ENCODE measurements at regions of chr2 and their contacts with region 1.

Region 1: DNA sequence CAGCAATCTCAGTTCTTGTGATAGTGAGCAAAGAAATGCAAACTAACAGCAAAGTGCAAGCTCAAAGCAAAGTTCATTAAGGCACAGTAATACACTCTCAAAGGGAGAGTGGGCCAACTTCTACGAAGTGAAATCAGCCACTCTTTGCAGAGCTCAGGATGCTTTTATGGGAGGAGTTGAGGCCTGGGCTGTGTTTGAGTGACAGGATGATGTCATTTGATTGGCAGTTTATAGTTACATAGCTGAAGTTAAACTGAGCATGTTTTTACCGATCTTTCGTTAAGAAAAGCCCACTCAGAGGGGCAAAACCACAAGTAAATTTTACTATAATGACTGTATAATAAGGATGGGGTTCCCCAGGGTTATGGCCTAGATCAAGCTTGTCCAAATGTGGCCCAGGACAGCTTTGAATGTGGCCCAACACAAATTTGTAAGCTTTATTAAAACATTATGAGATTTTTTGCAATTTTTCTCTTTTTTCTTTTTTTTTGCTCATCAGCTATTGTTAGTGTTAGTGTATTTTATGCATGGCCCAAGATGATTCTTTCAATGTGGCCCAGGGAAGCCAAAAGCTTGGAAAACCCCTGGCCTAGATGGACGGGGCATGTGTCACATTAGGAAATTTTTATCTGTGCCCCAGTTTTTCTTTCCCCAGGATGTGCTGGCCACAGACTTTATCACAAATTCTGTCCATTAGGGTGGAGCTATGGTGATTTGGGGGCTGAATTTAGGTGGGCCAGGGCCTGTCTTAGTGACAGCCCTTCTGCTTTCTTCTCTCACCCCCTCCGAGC is 8.3 kb upstream of the DNAH7 start:
- DNase-seq: no peak
- H3K4me3 Mint-ChIP-seq: no peak overlapping the region
- H3K27ac Mint-ChIP-seq: no peak overlapping the region
- H3K4me1 Mint-ChIP-seq: peaks cover 12% of the 10 kb centered on the region
- H3K27me3 Mint-ChIP-seq: no peaks in the 10 kb centered on the region

Region 2: GRCh38 chr2:196046123-196046917 is 30.7 kb before region 1 on chr2:
- CTCF ChIA-PET with region 1: no interaction called
- POLR2A ChIA-PET with region 1: no interaction called
- intact Hi-C with region 1: no loop called
- DNase-seq: no peak
- H3K4me3 Mint-ChIP-seq: no peak overlapping the region
- H3K27ac Mint-ChIP-seq: no peak overlapping the region
- H3K4me1 Mint-ChIP-seq: no peaks in the 10 kb centered on the region
- H3K27me3 Mint-ChIP-seq: peaks cover 4% of the 10 kb centered on the region

Region 3: GRCh38 chr2:196096982-196097745 is 20.2 kb after region 1 on chr2:
- CTCF ChIA-PET with region 1: interaction called, 25 read pairs
- POLR2A ChIA-PET with region 1: no interaction called
- intact Hi-C with region 1: no loop called
- DNase-seq: no peak
- H3K4me3 Mint-ChIP-seq: no peak overlapping the region
- H3K27ac Mint-ChIP-seq: no peak overlapping the region
- H3K4me1 Mint-ChIP-seq: peaks cover 23% of the 10 kb centered on the region
- H3K27me3 Mint-ChIP-seq: no peaks in the 10 kb centered on the region

Region 4: DNA sequence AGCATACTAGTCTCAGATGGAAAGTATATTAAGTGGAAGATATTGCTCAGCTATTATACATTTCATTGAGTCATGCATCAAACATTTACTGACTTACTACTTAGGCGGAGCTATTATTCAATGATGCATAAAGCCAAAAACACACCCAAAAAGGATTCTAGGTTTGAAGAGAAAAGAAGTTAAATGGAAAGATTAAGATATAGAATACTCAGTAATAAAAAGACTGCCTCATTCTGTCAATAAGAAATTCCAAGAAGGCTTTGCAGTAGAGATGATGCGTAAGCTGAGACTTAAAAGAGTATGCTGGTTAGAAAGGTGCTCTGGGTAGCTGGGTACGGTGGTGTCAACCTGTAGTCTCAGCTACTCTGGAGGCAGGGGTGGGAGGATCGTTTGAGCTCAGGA is 66.8 kb after region 1 on chr2:
- CTCF ChIA-PET with region 1: interaction called, 14 read pairs
- POLR2A ChIA-PET with region 1: no interaction called
- intact Hi-C with region 1: no loop called
- DNase-seq: no peak
- H3K4me3 Mint-ChIP-seq: no peak overlapping the region
- H3K27ac Mint-ChIP-seq: peak overlapping the region; percentile 87
- H3K4me1 Mint-ChIP-seq: peaks cover 59% of the 10 kb centered on the region
- H3K27me3 Mint-ChIP-seq: no peaks in the 10 kb centered on the region

Region 5: GRCh38 chr2:196213252-196213980 is 136.4 kb after region 1 on chr2:
- CTCF ChIA-PET with region 1: interaction called, 5 read pairs
- POLR2A ChIA-PET with region 1: no interaction called
- intact Hi-C with region 1: loop called (anchors 5 kb)
- DNase-seq: no peak
- H3K4me3 Mint-ChIP-seq: no peak overlapping the region
- H3K27ac Mint-ChIP-seq: peak overlapping the region; percentile 39
- H3K4me1 Mint-ChIP-seq: peaks cover 65% of the 10 kb centered on the region
- H3K27me3 Mint-ChIP-seq: no peaks in the 10 kb centered on the region

Region 6: DNA sequence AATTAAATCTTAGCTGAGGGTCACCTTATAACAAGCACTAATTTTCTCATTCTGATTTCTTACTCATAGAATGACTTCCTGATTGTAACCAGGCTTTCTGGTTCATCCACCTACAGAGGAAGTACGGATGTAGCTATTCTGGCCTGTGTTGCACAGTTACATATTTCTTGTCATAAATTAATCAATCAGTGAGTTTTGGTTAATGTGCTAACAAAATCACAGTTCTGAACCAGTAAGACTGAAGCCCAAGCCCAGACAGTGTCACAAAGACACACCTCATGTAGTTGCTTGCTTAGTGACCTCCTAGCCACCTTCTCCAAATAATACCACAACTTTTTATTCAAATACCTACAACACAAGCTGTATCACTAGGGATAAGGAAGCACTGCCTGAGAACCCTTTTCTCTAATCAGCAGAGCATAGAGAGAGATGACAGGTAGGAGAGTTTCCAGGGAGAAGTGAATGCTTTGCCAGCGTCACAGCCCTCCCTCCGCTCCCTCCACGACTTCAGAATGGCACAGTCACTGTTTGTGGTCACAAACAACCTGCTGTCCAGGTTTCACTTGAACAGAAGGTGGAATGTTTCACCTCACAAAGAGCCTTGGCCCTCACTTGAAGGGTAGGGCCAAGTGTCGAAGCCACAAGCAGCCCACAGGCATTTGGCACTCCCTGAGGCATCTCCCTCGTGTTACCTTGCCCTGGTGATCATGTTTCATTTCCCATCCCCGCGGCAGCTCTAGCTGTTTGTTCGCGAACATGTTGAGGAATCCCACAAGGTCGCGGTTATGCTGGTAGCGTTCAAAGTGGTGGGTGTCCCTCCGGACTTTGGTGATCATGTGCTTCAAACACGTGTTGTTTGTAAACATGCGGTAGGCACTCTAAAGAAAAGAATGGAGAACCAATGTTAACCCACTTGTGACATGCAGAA is 215.2 kb after region 1 on chr2:
- CTCF ChIA-PET with region 1: interaction called, 20 read pairs
- POLR2A ChIA-PET with region 1: no interaction called
- intact Hi-C with region 1: loop called (anchors 5 kb)
- DNase-seq: no peak
- H3K4me3 Mint-ChIP-seq: peak overlapping the region; percentile 10
- H3K27ac Mint-ChIP-seq: no peak overlapping the region
- H3K4me1 Mint-ChIP-seq: peaks cover 49% of the 10 kb centered on the region
- H3K27me3 Mint-ChIP-seq: no peaks in the 10 kb centered on the region

Region 7: DNA sequence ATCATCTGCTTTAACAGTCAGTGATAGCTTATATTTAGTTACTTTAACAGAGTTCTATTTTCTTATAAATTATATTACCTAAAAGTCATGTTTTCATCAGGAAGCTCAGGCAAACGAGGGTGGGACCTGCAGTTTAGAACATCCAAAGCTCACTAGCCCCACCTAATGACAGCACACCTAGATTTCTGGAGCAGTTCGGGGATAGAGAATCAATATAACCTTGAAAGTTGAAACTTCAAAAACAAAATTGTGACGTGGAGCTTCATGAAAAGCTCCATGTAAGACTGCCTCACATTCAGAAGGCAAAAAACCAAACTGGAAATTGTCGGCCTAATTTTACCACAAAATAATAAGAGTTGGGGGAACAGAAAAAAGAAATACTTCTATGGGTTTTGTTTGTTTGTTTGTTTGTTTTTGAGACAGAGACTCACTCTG is 376.7 kb after region 1 on chr2:
- CTCF ChIA-PET with region 1: interaction called, 65 read pairs
- POLR2A ChIA-PET with region 1: no interaction called
- intact Hi-C with region 1: loop called (anchors 1 kb)
- DNase-seq: peak; percentile 45
- H3K4me3 Mint-ChIP-seq: no peak overlapping the region
- H3K27ac Mint-ChIP-seq: no peak overlapping the region
- H3K4me1 Mint-ChIP-seq: no peaks in the 10 kb centered on the region
- H3K27me3 Mint-ChIP-seq: peaks cover 12% of the 10 kb centered on the region

Region 8: DNA sequence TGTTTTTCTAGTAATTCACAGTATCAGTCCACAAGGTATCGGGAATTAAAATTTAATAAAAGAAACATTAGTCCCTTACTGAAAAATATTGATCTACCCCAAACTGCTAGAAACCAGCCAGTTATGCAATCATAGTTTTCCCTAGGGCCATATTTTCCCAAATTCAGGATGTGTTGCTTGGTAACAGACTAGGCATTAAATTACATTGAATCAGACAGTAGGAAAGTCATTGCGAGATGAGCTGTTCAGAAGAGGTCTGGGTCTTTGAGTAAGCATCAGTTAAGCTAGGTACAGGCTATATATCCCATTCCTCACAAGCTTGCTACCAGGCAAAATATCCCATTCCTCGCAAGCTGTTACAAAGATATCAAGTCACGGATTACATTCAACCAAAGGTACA is 439.6 kb after region 1 on chr2:
- CTCF ChIA-PET with region 1: no interaction called
- POLR2A ChIA-PET with region 1: no interaction called
- intact Hi-C with region 1: no loop called
- DNase-seq: no peak
- H3K4me3 Mint-ChIP-seq: no peak overlapping the region
- H3K27ac Mint-ChIP-seq: no peak overlapping the region
- H3K4me1 Mint-ChIP-seq: no peaks in the 10 kb centered on the region
- H3K27me3 Mint-ChIP-seq: peaks cover 4% of the 10 kb centered on the region

Region 9: DNA sequence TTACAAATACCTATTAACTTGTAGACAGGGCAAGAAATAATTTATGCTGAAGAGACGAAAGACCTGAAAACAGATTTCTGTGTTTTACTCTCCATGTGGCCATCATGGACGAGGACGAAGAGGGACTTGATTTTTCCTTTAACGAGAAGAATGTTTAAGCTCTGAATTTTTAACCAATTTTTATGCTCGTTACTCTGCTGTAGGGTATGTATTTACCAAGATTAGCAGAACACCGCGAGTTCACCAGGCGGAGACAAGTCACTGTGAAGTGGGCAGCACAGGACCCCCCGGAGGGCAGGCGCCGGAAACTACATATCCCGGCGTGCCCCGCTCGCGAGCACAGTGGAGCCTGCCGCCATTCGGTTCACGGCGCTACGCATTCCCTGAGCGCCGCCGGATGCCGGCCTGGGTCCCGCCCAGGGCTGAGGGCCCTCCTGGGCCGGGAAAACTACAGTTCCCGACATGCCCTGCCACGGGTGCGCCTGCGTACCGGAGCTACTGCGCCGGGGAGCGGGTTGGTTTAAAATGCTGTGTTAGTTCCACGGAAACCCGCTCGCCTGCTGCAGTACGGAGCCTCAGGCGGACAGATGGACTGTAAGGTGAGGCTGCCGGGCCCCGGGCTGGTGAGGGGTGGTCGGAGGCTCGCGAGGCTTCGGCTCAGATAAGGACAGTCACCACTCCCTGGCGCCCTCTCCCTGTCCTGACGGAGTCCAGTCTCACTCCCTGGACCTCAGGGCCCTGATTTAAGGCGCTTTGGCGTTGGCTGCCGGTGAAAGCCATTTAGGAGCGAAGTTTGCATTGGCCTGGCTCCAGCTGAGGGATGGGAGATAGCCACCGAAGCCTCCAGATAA is 562.4 kb after region 1 on chr2 and contains the start of gene CCDC150:
- CTCF ChIA-PET with region 1: no interaction called
- POLR2A ChIA-PET with region 1: no interaction called
- intact Hi-C with region 1: loop called (anchors 1 kb)
- DNase-seq: peak; percentile 97
- H3K4me3 Mint-ChIP-seq: peak within 1 kb of the TSS; percentile 90
- H3K27ac Mint-ChIP-seq: peak within 1 kb of the TSS; percentile 62
- H3K4me1 Mint-ChIP-seq: peaks cover 15% of the 10 kb centered on the region
- H3K27me3 Mint-ChIP-seq: no peaks in the 10 kb centered on the region
- total RNA-seq, gene CCDC150: 13.2 to 13.9 TPM

Region 10: GRCh38 chr2:197740200-197740599 is 1663.2 kb after region 1 on chr2:
- CTCF ChIA-PET with region 1: no interaction called
- POLR2A ChIA-PET with region 1: no interaction called
- intact Hi-C with region 1: no loop called
- DNase-seq: no peak
- H3K4me3 Mint-ChIP-seq: no peak overlapping the region
- H3K27ac Mint-ChIP-seq: no peak overlapping the region
- H3K4me1 Mint-ChIP-seq: no peaks in the 10 kb centered on the region
- H3K27me3 Mint-ChIP-seq: no peaks in the 10 kb centered on the region